Panc1 (cell line): ENCODE measurements at regions of chr2 and their contacts with region 1.

Region 1: DNA sequence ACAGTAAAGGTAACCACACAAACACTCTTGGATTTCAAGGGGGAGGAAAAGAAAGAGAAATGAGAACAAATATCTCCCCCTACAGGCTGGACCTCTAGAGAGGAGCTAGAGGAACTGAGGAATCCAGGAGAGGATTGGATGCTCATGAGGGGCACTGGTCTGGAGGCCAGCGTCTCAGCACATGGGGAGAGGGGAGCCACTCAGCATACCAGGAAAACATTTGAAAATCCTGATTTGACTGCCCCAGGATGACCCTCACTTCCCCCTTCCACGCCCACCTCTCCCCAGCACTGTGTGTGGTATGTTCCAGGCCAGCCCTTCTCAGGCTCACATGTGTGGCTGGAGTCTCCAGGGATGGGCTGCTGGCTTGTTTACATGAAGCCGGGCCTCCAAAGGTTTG is 396.8 kb upstream of the ID2 start:
- DNase-seq: no peak
- ATAC-seq: no peak
- H3K4me3 ChIP-seq: no peak overlapping the region
- H3K27ac ChIP-seq: no peak overlapping the region
- H3K4me1 ChIP-seq: no peaks in the 10 kb centered on the region
- H3K27me3 ChIP-seq: no peaks in the 10 kb centered on the region; the same call in 1 of the 2 replicates
- CTCF ChIP-seq: no peak

Region 2: GRCh38 chr2:8633735-8634313 is 348.7 kb after region 1 on chr2:
- CTCF ChIA-PET with region 1: no interaction called
- POLR2A ChIA-PET with region 1: no interaction called
- in situ Hi-C with region 1: no loop called
- intact Hi-C with region 1: no loop called
- DNase-seq: no peak
- ATAC-seq: no peak
- H3K4me3 ChIP-seq: no peak overlapping the region
- H3K27ac ChIP-seq: no peak overlapping the region
- H3K4me1 ChIP-seq: peaks cover 4% of the 10 kb centered on the region; the same call in 1 of the 2 replicates
- H3K27me3 ChIP-seq: no peaks in the 10 kb centered on the region
- CTCF ChIP-seq: no peak

Region 3: DNA sequence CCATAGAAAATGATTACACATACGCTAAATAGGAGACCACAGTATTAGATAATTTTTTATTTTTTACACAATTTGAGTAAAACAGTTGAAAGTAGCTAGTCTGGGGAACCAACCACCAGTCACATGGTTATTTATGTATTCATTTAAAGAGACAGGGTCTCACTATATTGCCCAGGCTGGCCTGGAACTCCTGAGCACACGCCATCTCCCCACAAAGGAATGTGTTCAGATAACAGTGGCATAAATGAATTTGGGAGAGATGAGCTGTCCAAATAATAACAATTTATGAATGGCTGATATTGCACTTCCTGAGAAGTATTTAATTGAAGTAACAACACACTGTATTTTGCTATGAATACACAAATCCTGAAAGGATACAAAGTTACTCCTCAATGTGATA is 512.6 kb after region 1 on chr2:
- CTCF ChIA-PET with region 1: no interaction called
- POLR2A ChIA-PET with region 1: interaction called, 12 read pairs
- in situ Hi-C with region 1: no loop called
- intact Hi-C with region 1: no loop called
- DNase-seq: no peak
- ATAC-seq: no peak
- H3K4me3 ChIP-seq: no peak overlapping the region
- H3K27ac ChIP-seq: no peak overlapping the region
- H3K4me1 ChIP-seq: no peaks in the 10 kb centered on the region
- H3K27me3 ChIP-seq: no peaks in the 10 kb centered on the region
- CTCF ChIP-seq: no peak